Heart left ventricle (tissue), 16 donors: ENCODE measurements at regions of chr16 and their contacts with region 1.

Region 1: GRCh38 chr16:74617206-74617788 is 10.4 kb upstream of the GLG1 start:
- DNase-seq: no peak
- ATAC-seq: no peak
- H3K4me3 ChIP-seq: no peak overlapping the region
- H3K27ac ChIP-seq: no peak overlapping the region
- H3K4me1 ChIP-seq: no peaks in the 10 kb centered on the region
- H3K27me3 ChIP-seq: no peaks in the 10 kb centered on the region
- CTCF ChIP-seq: no peak
- POLR2A ChIP-seq: no peak

Region 2: GRCh38 chr16:74480141-74481029 is 136.9 kb before region 1 on chr16:
- intact Hi-C with region 1: loop called in 4 of 10 experiments (anchors 5 to 10 kb)
- DNase-seq: peak in 3 of 5 donors; percentile 13 to 36 (median 19)
- ATAC-seq: peak in 3 of 4 donors; percentile 66 to 76 (median 68)
- H3K4me3 ChIP-seq: no peak overlapping the region
- H3K27ac ChIP-seq: peak overlapping the region in 4 of 12 donors; percentile 9 to 33 (median 20)
- H3K4me1 ChIP-seq: peaks cover 0 to 19% (median 0%) of the 10 kb centered on the region in 12 donors
- H3K27me3 ChIP-seq: no peaks in the 10 kb centered on the region
- CTCF ChIP-seq: no peak
- POLR2A ChIP-seq: no peak

Region 3: DNA sequence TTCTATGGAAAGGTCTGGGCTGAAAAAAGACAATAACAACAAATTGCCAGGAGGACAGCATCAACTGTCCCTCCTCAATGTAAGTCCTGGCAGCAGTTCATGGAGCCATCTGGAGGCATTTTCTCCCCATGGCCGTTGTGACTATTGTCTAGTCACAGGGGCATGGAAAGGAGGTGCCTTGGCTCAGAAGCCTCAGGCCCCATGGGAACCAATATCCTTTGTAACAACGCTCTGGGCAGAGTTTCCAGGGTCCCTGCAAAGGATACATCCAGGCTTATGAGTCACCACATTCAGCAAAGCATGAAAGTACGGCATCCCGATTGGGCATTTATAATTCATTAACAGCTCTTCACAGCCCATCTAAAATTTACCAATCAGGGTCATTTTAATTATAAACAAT is 95.6 kb before region 1 on chr16:
- intact Hi-C with region 1: no loop called
- DNase-seq: peak in 4 of 5 donors; percentile 14 to 51 (median 23)
- ATAC-seq: peak; percentile 55 to 84 (median 70)
- H3K4me3 ChIP-seq: no peak overlapping the region
- H3K27ac ChIP-seq: peak overlapping the region in 2 of 12 donors; percentile 5 to 46
- H3K4me1 ChIP-seq: peaks cover 0 to 19% (median 10%) of the 10 kb centered on the region in 12 donors
- H3K27me3 ChIP-seq: no peaks in the 10 kb centered on the region
- CTCF ChIP-seq: no peak
- POLR2A ChIP-seq: no peak

Region 4: DNA sequence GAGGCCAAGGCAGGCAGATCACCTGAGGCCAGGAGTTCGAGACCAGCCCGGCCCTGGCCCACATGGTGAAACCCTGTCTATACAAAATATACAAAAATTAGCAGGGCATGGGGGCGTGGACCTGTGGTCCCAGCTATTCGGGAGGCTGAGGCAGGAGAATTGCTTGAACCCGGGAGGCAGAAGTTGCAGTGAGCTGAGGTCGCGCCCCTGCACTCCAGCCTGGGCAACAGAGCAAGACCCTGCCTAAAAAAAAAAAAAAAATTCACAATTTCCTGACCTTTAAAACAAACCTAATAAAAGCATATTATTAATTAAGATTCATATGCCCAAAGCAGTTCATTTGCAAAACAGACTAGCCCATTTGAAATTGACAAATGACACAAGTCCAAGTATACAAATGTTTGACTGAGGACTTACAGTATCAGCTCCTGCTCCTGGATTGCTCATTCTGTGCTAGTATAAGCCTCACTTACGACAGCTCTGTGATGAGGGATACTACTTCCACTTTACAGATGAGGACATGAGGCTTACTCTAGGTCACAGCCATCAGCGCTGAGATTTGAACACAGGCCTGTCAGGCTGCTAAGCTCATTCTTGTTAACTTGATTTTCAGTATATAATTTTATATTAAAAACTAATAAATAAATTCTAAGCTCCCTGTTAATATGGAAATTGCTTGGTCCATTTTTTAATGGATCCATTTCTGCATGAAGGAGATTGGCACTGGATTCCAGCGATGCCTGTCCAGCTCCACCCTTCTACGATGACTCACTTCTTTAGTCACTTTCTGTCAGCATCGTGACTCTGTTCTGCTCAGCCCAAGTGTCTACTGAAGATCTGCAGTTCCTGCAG is 279.3 kb after region 1 on chr16:
- intact Hi-C with region 1: no loop called
- DNase-seq: no peak
- ATAC-seq: peak in 3 of 4 donors; percentile 39 to 79 (median 79)
- H3K4me3 ChIP-seq: no peak overlapping the region
- H3K27ac ChIP-seq: no peak overlapping the region
- H3K4me1 ChIP-seq: peaks cover 0 to 18% (median 5%) of the 10 kb centered on the region in 12 donors
- H3K27me3 ChIP-seq: no peaks in the 10 kb centered on the region
- CTCF ChIP-seq: no peak
- POLR2A ChIP-seq: no peak

Region 5: DNA sequence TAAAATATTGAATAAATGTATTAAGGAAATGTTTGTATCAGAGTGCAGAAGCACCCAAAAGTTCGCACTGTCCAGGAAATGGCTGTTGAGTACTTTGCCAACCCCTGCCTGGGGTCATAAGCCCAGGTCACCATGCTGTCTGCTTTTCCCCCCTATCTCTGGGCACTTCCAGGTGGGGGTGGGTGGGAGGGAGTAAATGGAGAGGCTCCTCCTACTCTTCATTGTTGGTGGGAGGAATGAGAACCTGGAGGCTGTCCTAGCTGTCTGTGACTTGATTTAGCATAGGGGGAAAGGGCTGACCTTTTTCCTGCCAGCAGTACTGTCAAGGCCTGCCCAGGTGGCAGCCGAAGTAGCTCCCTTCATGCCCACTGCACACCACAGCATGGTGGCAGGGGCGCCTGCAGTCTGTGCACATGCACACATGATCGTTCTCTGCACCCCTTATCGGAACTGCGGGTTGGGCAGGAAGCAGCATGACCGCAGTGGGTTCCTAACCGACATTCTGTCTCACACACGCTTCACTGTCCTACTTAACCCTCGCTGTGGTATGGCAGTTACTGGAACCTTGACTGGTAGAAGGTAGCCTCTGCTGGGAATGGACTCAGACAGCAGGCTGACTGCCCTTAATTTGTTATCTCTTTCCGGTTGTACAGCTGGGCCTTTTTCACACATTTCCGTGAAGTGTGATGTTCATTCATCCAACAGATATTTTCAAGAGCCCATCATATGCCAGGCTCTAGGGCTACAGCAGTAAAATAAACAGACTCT is 457.8 kb after region 1 on chr16:
- intact Hi-C with region 1: no loop called
- DNase-seq: peak in 1 of 5 donors; percentile 72
- ATAC-seq: peak in 3 of 4 donors; percentile 63 to 75 (median 64)
- H3K4me3 ChIP-seq: no peak overlapping the region
- H3K27ac ChIP-seq: peak overlapping the region in 1 of 12 donors; percentile 39
- H3K4me1 ChIP-seq: peaks cover 2 to 59% (median 23%) of the 10 kb centered on the region in 12 donors
- H3K27me3 ChIP-seq: no peaks in the 10 kb centered on the region
- CTCF ChIP-seq: no peak
- POLR2A ChIP-seq: no peak